ENCODE measurements at regions of chr18 and their contacts with region 1.

Region 1: GRCh38 chr18:21656402-21656801 is 44.3 kb downstream of the SNRPD1 start:
- DNase-seq: no peak
- H3K4me3 ChIP-seq: no peak overlapping the region
- H3K4me3 Mint-ChIP-seq: no peak overlapping the region
- H3K27ac ChIP-seq: no peak overlapping the region
- H3K27ac Mint-ChIP-seq: peak overlapping the region in 2 of 7 donors; percentile 43 to 77
- H3K4me1 ChIP-seq: no peaks in the 10 kb centered on the region
- H3K4me1 Mint-ChIP-seq: no peaks in the 10 kb centered on the region
- H3K27me3 ChIP-seq: no peaks in the 10 kb centered on the region
- H3K27me3 Mint-ChIP-seq: no peaks in the 10 kb centered on the region

Region 2: DNA sequence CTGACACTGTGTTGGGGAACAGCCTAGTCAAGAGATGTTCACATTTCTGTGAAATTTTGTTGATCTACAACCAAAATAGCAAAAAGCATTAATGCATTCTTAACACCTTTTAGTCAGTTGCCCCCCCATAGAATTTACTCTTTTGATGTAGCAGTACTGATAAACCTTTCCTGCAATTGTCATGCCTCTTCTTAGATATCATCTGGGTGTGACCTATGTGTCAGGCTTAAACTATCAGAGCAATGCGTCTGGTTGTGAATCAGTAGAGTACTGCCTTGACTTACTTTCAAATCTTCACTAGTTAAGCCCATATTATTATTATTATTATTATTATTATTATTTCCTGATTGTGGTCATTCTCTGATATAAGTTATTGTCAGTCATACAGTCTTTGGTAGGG is 352.5 kb before region 1 on chr18:
- CTCF ChIA-PET with region 1: no interaction called
- POLR2A ChIA-PET with region 1: no interaction called
- intact Hi-C with region 1: loop called (anchors 10 kb)
- DNase-seq: no peak
- H3K4me3 ChIP-seq: no peak overlapping the region
- H3K4me3 Mint-ChIP-seq: no peak overlapping the region
- H3K27ac ChIP-seq: no peak overlapping the region
- H3K27ac Mint-ChIP-seq: no peak overlapping the region
- H3K4me1 ChIP-seq: no peaks in the 10 kb centered on the region
- H3K4me1 Mint-ChIP-seq: peaks cover 0 to 1% (median 0%) of the 10 kb centered on the region in 4 donors
- H3K27me3 ChIP-seq: no peaks in the 10 kb centered on the region
- H3K27me3 Mint-ChIP-seq: peaks cover 7 to 12% of the 10 kb centered on the region in 2 donors

Region 3: DNA sequence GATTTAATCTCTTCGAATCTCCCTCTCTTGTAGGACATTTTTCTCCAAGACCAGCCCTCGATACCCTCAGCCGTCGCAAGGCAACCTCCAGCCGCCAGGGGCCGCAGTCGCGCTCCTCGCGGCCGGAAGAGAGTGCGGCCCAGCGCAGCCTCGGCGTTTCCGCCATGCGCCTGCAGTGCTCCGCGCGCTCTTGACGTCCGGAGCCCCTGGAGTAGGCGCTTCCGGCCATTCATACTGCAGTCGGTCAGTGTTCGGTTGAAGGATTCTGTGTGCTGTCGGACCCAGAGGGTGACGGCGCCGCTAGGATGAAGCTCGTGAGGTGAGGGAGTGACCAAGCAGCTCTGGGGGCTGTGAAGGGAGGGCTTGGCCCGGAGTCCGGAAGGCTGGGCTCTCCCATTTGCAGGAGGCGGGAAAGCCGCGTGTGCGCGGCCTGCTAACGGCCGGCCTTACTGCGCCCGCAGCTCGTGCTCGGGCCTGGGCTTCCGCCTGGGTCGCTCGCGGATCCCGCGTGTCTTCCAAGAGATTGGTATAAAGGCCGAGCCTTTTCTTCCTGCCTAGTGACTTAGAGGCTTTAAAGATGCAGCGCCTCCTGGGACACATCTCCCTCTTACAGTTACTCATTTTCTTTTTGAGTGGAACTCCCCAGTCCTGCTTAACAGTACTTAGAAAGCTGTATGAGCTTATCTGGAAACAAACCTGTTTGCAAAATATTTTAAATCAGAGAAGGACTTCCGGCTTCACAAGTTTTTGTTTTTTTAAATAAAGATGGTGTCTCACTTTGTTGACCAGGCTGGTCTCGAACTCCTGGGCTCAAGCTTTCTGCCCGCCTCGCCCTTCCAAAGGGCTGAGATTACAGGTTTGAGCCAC is 44.0 kb before region 1 on chr18 and contains the start of gene SNRPD1:
- CTCF ChIA-PET with region 1: no interaction called
- POLR2A ChIA-PET with region 1: no interaction called
- intact Hi-C with region 1: no loop called
- DNase-seq: peak; percentile 83 to 90 (median 86)
- H3K4me3 ChIP-seq: peak within 1 kb of the TSS; percentile 93 to 97
- H3K4me3 Mint-ChIP-seq: peak within 1 kb of the TSS; percentile 97 to 100 (median 99)
- H3K27ac ChIP-seq: peak within 1 kb of the TSS; percentile 85
- H3K27ac Mint-ChIP-seq: peak within 1 kb of the TSS; percentile 97 to 100 (median 99)
- H3K4me1 ChIP-seq: peaks cover 41% of the 10 kb centered on the region
- H3K4me1 Mint-ChIP-seq: peaks cover 26 to 55% (median 37%) of the 10 kb centered on the region in 4 donors
- H3K27me3 ChIP-seq: no peaks in the 10 kb centered on the region
- H3K27me3 Mint-ChIP-seq: no peaks in the 10 kb centered on the region
- total RNA-seq, gene SNRPD1: 24.4 to 24.5 TPM

Region 4: DNA sequence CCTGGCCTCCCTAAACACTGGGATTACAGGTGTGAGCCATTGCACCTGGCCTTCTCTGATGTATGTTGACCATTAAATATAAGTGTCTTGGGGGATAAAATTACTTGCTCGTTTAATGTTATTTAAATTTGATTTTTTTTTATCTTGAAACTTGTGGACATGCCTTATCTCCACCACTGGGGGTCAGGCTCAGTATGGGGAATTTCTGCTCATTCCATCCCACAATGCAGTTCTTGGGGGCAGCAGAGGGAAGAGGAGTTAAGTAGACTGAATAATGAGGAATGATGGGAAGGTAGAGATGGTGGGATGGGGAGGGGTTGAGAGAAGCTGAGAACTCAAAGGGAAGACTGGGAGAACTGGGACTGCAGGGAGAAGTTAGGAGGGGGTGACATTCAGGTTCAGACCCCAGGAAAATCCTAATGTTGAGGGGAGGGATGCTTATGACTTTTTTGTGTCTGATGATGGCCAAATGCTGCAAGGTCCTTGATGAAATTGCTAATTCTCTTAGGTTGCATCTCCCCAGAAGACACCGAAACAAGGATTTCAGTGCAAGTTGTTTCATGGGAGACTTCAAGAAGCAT is 258.4 kb after region 1 on chr18:
- CTCF ChIA-PET with region 1: no interaction called
- POLR2A ChIA-PET with region 1: no interaction called
- intact Hi-C with region 1: no loop called
- DNase-seq: no peak
- H3K4me3 ChIP-seq: no peak overlapping the region
- H3K4me3 Mint-ChIP-seq: no peak overlapping the region
- H3K27ac ChIP-seq: no peak overlapping the region
- H3K27ac Mint-ChIP-seq: no peak overlapping the region
- H3K4me1 ChIP-seq: no peaks in the 10 kb centered on the region
- H3K4me1 Mint-ChIP-seq: no peaks in the 10 kb centered on the region
- H3K27me3 ChIP-seq: no peaks in the 10 kb centered on the region
- H3K27me3 Mint-ChIP-seq: peaks cover 4 to 14% of the 10 kb centered on the region in 2 donors

Measured in CD4-positive, alpha-beta memory T cell (primary cell).